Left colon (tissue), 2 donors: ENCODE measurements at regions of chr1 and their contacts with region 1.

Region 1: GRCh38 chr1:87335175-87335884 is 6.7 kb downstream of the LMO4 start:
- DNase-seq: peak; percentile 83 to 88
- ATAC-seq: peak; percentile 80

Region 2: DNA sequence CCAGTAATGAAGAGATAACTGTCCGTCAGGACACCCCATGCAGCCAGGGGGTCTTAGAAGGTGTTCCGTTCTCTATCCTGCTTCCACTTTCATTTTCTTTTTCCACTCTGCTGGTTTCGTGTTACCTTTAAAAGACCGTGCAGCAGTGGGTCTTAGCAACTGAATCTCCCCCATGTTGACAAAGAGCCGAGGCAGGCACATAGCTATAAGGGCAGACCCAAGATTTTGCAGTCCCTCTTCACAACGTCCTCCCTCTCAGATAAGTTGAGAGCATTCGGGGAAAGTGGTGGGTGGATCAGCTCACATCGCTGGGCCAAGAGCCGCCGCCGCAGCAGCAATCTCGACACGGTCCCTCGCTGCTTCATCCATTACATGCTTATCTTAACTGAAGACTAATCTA is 348.9 kb after region 1 on chr1:
- intact Hi-C with region 1: loop called in 1 of 2 experiments (anchors 10 kb)
- DNase-seq: peak in 1 of 2 donors; percentile 40
- ATAC-seq: peak; percentile 75